ENCODE measurements at regions of chr13 and their contacts with region 1.

Region 1: DNA sequence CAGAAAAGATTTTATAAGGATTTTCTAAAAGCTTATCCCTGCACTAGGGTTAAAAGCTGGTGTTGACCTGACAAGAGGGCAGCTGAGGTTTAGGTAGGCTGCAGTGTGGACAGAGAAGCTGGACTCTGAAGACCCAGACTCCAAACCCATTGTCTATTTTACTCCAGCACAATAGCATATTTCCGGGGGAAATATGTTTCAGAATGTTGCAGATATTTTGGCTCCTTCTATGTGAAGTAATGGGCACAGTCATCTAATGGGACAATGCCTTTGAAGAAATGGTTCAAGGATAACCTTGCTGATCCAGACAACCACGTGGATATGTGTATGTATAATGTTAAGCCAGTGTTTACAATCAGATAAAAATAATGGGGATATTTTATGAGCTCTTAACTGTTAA is 173.8 kb upstream of the TSC22D1 start:
- DNase-seq: no peak
- H3K4me3 ChIP-seq: no peak overlapping the region
- H3K27ac ChIP-seq: no peak overlapping the region
- H3K27me3 ChIP-seq: no peaks in the 10 kb centered on the region
- CTCF ChIP-seq: no peak

Region 2: GRCh38 chr13:44726214-44726613 is 23.7 kb before region 1 on chr13:
- intact Hi-C with region 1: loop called in 1 of 2 experiments (anchors 2 kb)
- DNase-seq: no peak
- H3K4me3 ChIP-seq: no peak overlapping the region
- H3K27ac ChIP-seq: no peak overlapping the region
- H3K27me3 ChIP-seq: no peaks in the 10 kb centered on the region
- CTCF ChIP-seq: no peak

Region 3: GRCh38 chr13:44917589-44918325 is 167.9 kb after region 1 on chr13:
- intact Hi-C with region 1: no loop called
- DNase-seq: peak; percentile 90 to 97 (median 96)
- H3K4me3 ChIP-seq: peak overlapping the region; percentile 52 to 87 (median 68)
- H3K27ac ChIP-seq: peak overlapping the region; percentile 89 to 100 (median 99)
- H3K27me3 ChIP-seq: no peaks in the 10 kb centered on the region
- CTCF ChIP-seq: peak in 31 of 56 donors; percentile 10 to 61 (median 32)

Measured in dorsolateral prefrontal cortex (tissue), 120 donors.